A549 (cell line): ENCODE measurements at regions of chr5 and their contacts with region 1.

Region 1: GRCh38 chr5:149141224-149141956 is at the start of gene ABLIM3:
- DNase-seq: peak; percentile 74 to 88
- ATAC-seq: peak; percentile 92 to 96
- H3K4me3 ChIP-seq: peak within 1 kb of the TSS; percentile 65
- H3K27ac ChIP-seq: peak within 1 kb of the TSS; percentile 69 to 83
- H3K4me1 ChIP-seq: peaks cover 12% of the 10 kb centered on the region; the same call in 1 of the 3 replicates
- CTCF ChIP-seq: peak; percentile 92
- EP300 ChIP-seq: no peak
- POLR2A ChIP-seq: no peak
- RAD21 ChIP-seq: peak; percentile 50 to 77; a peak in 4 of 5 replicates
- polyA plus RNA-seq, gene ABLIM3: 2.7 and 3.5 TPM in 2 replicates

Region 2: GRCh38 chr5:148532962-148533670 is 608.3 kb before region 1 on chr5:
- CTCF ChIA-PET with region 1: no interaction called
- POLR2A ChIA-PET with region 1: no interaction called
- DNase-seq: no peak
- ATAC-seq: no peak
- H3K4me3 ChIP-seq: no peak overlapping the region
- H3K27ac ChIP-seq: no peak overlapping the region
- H3K4me1 ChIP-seq: no peaks in the 10 kb centered on the region
- CTCF ChIP-seq: no peak
- EP300 ChIP-seq: no peak
- POLR2A ChIP-seq: no peak
- RAD21 ChIP-seq: no peak

Region 3: GRCh38 chr5:148776780-148777179 is 364.6 kb before region 1 on chr5:
- CTCF ChIA-PET with region 1: no interaction called
- POLR2A ChIA-PET with region 1: no interaction called
- DNase-seq: peak; percentile 12 to 41
- ATAC-seq: peak; percentile 73 to 85; a peak in 5 of 6 replicates
- H3K4me3 ChIP-seq: no peak overlapping the region
- H3K27ac ChIP-seq: no peak overlapping the region
- H3K4me1 ChIP-seq: no peaks in the 10 kb centered on the region
- CTCF ChIP-seq: no peak
- EP300 ChIP-seq: no peak
- POLR2A ChIP-seq: no peak
- RAD21 ChIP-seq: no peak

Region 4: DNA sequence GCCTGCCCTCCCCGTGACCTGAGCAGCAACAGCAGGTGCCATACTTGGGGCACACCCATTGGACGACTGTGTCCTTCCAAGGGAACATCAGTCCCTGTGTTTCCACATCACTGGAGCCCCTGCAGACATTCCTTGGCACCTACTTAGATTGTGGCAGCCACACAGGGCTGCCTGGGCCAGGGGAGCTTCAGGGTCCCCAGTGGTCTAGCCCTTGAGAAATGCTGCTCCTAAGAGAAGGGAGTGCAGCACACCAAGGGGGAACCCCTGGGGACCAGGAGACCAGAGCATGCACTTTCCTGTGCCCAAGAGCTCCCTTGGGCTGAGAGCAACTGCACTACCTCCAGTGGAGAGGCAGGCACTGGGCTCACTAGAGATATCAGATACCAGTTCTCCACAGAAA is 20.2 kb before region 1 on chr5:
- CTCF ChIA-PET with region 1: interaction called, 10 read pairs
- POLR2A ChIA-PET with region 1: no interaction called
- DNase-seq: no peak
- ATAC-seq: peak in 1 of 2 experiments; percentile 43; a peak in 1 of 6 replicates
- H3K4me3 ChIP-seq: no peak overlapping the region
- H3K27ac ChIP-seq: no peak overlapping the region
- H3K4me1 ChIP-seq: no peaks in the 10 kb centered on the region
- CTCF ChIP-seq: no peak
- EP300 ChIP-seq: no peak
- POLR2A ChIP-seq: no peak
- RAD21 ChIP-seq: no peak

Region 5: DNA sequence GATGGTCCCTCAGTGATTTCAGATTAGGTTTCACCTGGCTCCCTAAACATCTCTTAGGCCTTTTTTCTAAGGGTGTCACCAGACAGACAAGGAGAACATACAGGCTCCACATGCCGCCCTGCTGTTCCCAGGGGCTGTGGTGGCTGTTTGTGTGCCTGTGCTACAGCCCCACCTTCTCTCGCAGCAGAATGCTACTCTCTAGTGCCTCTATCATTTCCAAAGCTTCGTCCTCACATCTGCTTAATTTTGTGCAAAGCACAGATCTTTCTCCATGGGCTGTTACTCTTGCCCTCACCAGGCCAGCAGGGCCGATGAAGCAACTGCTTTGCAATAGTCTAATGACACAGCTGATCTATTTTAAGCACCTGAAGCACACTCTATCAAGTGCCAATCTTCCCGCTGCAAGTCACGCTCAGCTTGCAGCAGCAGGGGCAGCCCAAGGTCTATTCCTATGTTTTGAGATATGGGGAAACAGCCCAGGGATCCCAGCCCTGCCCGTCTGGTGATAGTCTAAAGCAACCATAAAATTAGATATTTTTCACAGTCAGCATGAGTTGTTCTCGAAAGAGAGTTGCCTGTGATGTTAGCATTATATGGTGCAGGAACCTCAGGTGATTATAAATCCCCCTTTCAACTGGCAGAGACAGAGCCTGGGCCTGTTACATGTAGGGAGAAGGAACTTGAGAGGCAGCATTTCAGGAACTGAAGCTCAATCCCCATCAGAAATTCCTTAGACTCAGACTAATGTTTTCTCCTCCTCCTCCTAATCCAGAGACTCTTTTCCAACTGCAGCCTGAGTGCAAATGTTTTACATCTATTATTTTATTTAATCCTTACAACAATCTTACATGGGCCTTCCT is 12.6 kb after region 1 on chr5:
- CTCF ChIA-PET with region 1: interaction called, 59 read pairs
- POLR2A ChIA-PET with region 1: interaction called, 3 read pairs
- DNase-seq: peak in 1 of 2 experiments; percentile 35
- ATAC-seq: peak; percentile 54 to 68; a peak in 5 of 6 replicates
- H3K4me3 ChIP-seq: no peak overlapping the region
- H3K27ac ChIP-seq: peak overlapping the region; percentile 41 to 61
- H3K4me1 ChIP-seq: peaks cover 23% of the 10 kb centered on the region
- CTCF ChIP-seq: no peak
- EP300 ChIP-seq: no peak
- POLR2A ChIP-seq: no peak
- RAD21 ChIP-seq: no peak

Region 6: DNA sequence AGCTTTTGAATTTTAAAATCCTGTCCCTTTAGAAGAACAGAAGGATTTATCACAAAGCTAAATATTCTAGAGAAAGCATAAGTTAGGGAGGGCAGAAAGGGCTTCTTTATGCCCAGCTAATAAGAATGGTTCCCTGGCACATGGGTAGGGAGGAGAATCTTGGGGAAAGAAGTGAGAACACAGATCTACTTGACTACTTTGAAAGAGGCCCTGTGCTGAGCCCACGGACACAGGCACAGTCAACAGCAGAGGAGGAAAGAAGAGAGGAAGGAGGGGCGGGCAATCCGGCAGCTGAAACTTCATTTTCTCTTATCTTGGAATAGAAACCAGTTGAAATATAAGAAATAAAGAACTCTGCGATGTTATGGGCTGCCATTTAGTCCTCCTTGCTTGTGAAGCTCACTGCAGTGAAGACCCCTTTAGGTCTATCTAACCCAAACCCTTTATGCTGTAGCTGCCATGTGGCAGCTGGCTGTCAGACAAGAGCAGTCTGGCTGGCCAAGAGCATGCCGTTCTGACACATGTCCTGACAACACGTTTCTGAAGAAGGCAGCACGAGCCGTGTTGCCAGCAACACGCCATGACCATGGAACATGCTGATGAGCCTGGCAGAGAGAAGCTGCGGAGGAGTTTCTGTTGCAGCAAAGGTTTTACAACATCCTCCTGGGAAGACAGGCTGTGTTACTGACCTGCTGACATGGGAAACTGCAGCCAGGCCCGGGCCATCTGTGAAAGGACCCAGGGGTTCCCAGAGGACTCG is 34.1 kb after region 1 on chr5:
- CTCF ChIA-PET with region 1: interaction called, 16 read pairs
- POLR2A ChIA-PET with region 1: no interaction called
- DNase-seq: no peak
- ATAC-seq: no peak
- H3K4me3 ChIP-seq: no peak overlapping the region
- H3K27ac ChIP-seq: peak overlapping the region in 1 of 2 experiments; percentile 68; a peak in 2 of 6 replicates
- H3K4me1 ChIP-seq: peaks cover 22% of the 10 kb centered on the region; the same call in 2 of the 3 replicates
- CTCF ChIP-seq: no peak
- EP300 ChIP-seq: no peak
- POLR2A ChIP-seq: no peak
- RAD21 ChIP-seq: no peak

Region 7: GRCh38 chr5:149222914-149223848 is 81.8 kb after region 1 on chr5:
- CTCF ChIA-PET with region 1: interaction called, 149 read pairs
- POLR2A ChIA-PET with region 1: no interaction called
- DNase-seq: no peak
- ATAC-seq: no peak; a peak in 1 of 6 replicates
- H3K4me3 ChIP-seq: no peak overlapping the region
- H3K27ac ChIP-seq: no peak overlapping the region
- H3K4me1 ChIP-seq: peaks cover 9% of the 10 kb centered on the region; the same call in 1 of the 3 replicates
- CTCF ChIP-seq: no peak
- EP300 ChIP-seq: no peak
- POLR2A ChIP-seq: no peak
- RAD21 ChIP-seq: no peak

Region 8: DNA sequence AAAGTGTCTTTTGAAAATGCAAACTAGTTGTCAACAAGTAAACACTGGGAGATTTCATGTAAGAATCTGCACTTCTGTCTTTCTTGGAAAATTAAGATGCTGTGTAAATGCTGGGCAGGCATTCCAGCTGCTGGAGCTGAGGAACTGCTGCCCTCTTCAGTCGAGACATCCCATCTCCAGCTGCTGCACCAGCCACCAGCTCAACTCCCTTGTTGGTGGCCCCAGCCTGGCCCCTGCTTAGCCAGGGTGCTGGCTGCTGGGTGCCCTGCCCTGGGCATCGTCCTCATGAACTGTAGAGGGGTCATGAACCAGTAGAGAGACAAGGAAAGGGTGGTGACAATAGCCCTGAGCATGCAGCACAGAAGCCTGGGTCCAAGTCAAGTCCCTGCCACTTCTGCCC is 97.2 kb after region 1 on chr5:
- CTCF ChIA-PET with region 1: interaction called, 149 read pairs
- POLR2A ChIA-PET with region 1: no interaction called
- DNase-seq: no peak
- ATAC-seq: peak; percentile 55 to 69; a peak in 3 of 6 replicates
- H3K4me3 ChIP-seq: no peak overlapping the region
- H3K27ac ChIP-seq: no peak overlapping the region
- H3K4me1 ChIP-seq: no peaks in the 10 kb centered on the region
- CTCF ChIP-seq: no peak
- EP300 ChIP-seq: no peak
- POLR2A ChIP-seq: no peak
- RAD21 ChIP-seq: peak in 1 of 2 experiments; percentile 33; a peak in 3 of 5 replicates

Region 9: GRCh38 chr5:149268928-149269557 is 127.7 kb after region 1 on chr5:
- CTCF ChIA-PET with region 1: interaction called, 18 read pairs
- POLR2A ChIA-PET with region 1: no interaction called
- DNase-seq: peak; percentile 67 to 71
- ATAC-seq: peak in 1 of 2 experiments; percentile 22; a peak in 2 of 6 replicates
- H3K4me3 ChIP-seq: no peak overlapping the region
- H3K27ac ChIP-seq: no peak overlapping the region
- H3K4me1 ChIP-seq: peaks cover 9% of the 10 kb centered on the region; the same call in 1 of the 3 replicates
- CTCF ChIP-seq: peak; percentile 82
- EP300 ChIP-seq: no peak
- POLR2A ChIP-seq: no peak
- RAD21 ChIP-seq: peak; percentile 71 to 75